ENCODE measurements at regions of chr16 and their contacts with region 1.

Region 1: GRCh38 chr16:89860747-89861304 is 12.6 kb upstream of the TCF25 start:
- DNase-seq: peak; percentile 36 to 86 (median 60)
- ATAC-seq: peak; percentile 50 to 81 (median 76)
- H3K4me3 ChIP-seq: no peak overlapping the region
- H3K27ac ChIP-seq: no peak overlapping the region
- H3K4me1 ChIP-seq: peaks cover 0 to 35% (median 14%) of the 10 kb centered on the region in 12 donors
- H3K27me3 ChIP-seq: no peaks in the 10 kb centered on the region
- CTCF ChIP-seq: peak; percentile 87 to 98 (median 94)
- POLR2A ChIP-seq: no peak

Region 2: GRCh38 chr16:89708441-89708931 is 152.3 kb before region 1 on chr16:
- intact Hi-C with region 1: loop called in 6 of 10 experiments (anchors 2 to 10 kb)
- DNase-seq: peak in 1 of 5 donors; percentile 23
- ATAC-seq: peak in 3 of 4 donors; percentile 2 to 43 (median 31)
- H3K4me3 ChIP-seq: no peak overlapping the region
- H3K27ac ChIP-seq: no peak overlapping the region
- H3K4me1 ChIP-seq: peaks cover 0 to 21% (median 5%) of the 10 kb centered on the region in 12 donors
- H3K27me3 ChIP-seq: peaks cover 0 to 4% (median 0%) of the 10 kb centered on the region in 9 donors
- CTCF ChIP-seq: no peak
- POLR2A ChIP-seq: no peak

Region 3: DNA sequence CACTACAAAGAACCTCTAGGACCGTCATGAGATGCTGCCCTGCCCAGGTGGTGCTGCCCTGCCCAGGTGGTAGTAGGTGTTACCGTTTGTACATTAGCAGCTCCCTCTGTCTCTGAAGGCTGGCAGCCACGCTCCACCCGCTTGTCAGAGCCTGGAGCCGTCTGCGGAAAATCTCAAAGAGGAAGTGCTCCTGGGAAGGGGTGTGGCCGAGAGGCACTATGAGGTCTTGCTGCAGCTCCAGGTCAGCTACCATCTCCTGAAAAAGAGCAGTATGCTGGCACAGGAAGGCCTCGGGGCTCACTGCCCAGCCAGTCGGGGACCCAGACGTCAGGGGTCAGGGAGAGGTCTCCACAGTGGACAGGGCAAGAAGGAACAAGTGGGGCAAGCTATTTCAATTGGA is 111.2 kb before region 1 on chr16:
- intact Hi-C with region 1: loop called in 9 of 10 experiments (anchors 1 to 10 kb)
- DNase-seq: peak in 3 of 5 donors; percentile 28 to 40 (median 39)
- ATAC-seq: peak in 3 of 4 donors; percentile 32 to 42 (median 40)
- H3K4me3 ChIP-seq: no peak overlapping the region
- H3K27ac ChIP-seq: no peak overlapping the region
- H3K4me1 ChIP-seq: peaks cover 0 to 9% (median 0%) of the 10 kb centered on the region in 12 donors
- H3K27me3 ChIP-seq: no peaks in the 10 kb centered on the region
- CTCF ChIP-seq: no peak
- POLR2A ChIP-seq: no peak

Region 4: DNA sequence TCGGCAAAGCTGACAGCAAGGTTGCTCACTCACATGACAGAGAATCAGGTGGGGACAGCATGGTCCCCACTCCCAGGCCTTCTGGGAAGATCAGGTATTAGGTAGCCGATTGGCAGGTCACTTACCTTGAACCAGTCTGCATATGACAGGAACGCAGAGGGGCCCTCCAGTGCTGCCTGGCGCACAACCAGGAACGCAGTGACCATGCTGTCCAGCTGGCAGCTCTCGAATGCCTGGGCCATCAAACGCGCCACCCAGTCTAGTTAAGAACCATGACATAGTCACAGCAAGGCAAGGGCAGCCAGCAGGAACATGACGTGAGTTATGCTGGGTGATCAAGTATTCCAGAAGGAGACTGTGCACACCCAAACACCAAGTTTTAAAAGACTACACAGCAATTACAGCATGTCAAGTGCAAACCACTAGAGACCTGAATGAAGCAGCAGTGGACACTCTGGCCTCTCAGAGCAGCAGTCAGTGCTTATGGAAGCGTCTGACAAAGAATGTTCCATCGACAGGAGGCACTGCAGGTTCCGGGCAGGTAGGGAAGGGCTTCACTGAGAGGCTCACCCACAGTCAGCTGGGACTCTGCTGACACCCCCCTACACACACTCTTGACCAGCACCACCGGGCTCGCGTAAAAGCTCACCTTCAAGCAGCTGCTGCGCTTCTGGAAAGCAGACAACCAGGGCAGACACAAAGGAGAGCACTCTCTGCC is 69.4 kb before region 1 on chr16:
- intact Hi-C with region 1: loop called in 2 of 10 experiments (anchors 5 kb)
- DNase-seq: no peak
- ATAC-seq: peak in 3 of 4 donors; percentile 22 to 47 (median 41)
- H3K4me3 ChIP-seq: no peak overlapping the region
- H3K27ac ChIP-seq: no peak overlapping the region
- H3K4me1 ChIP-seq: no peaks in the 10 kb centered on the region
- H3K27me3 ChIP-seq: no peaks in the 10 kb centered on the region
- CTCF ChIP-seq: no peak
- POLR2A ChIP-seq: no peak

Region 5: GRCh38 chr16:89798832-89799370 is 61.9 kb before region 1 on chr16:
- intact Hi-C with region 1: loop called in 2 of 10 experiments (anchors 5 kb)
- DNase-seq: peak in 4 of 5 donors; percentile 12 to 58 (median 39)
- ATAC-seq: peak; percentile 84 to 89 (median 86)
- H3K4me3 ChIP-seq: peak overlapping the region in 5 of 12 donors; percentile 8 to 29 (median 9)
- H3K27ac ChIP-seq: peak overlapping the region; percentile 4 to 73 (median 39)
- H3K4me1 ChIP-seq: peaks cover 0 to 15% (median 7%) of the 10 kb centered on the region in 12 donors
- H3K27me3 ChIP-seq: no peaks in the 10 kb centered on the region
- CTCF ChIP-seq: no peak
- POLR2A ChIP-seq: no peak

Region 6: GRCh38 chr16:89815639-89816348 is 45.0 kb before region 1 on chr16:
- intact Hi-C with region 1: loop called in 1 of 10 experiments (anchors 5 kb)
- DNase-seq: peak in 1 of 5 donors; percentile 11
- ATAC-seq: no peak
- H3K4me3 ChIP-seq: peak overlapping the region; percentile 59 to 94 (median 70)
- H3K27ac ChIP-seq: peak overlapping the region in 1 of 12 donors; percentile 95
- H3K4me1 ChIP-seq: peaks cover 0 to 28% (median 6%) of the 10 kb centered on the region in 12 donors
- H3K27me3 ChIP-seq: peaks cover 0 to 4% (median 0%) of the 10 kb centered on the region in 9 donors
- CTCF ChIP-seq: no peak
- POLR2A ChIP-seq: no peak

Region 7: GRCh38 chr16:89828199-89828778 is 32.5 kb before region 1 on chr16 and contains the start of gene SPIRE2:
- intact Hi-C with region 1: no loop called
- DNase-seq: peak; percentile 73 to 85 (median 82)
- ATAC-seq: peak; percentile 59 to 86 (median 81)
- H3K4me3 ChIP-seq: peak within 1 kb of the TSS; percentile 34 to 79 (median 59)
- H3K27ac ChIP-seq: peak within 1 kb of the TSS; percentile 32 to 97 (median 86)
- H3K4me1 ChIP-seq: peaks cover 0 to 18% (median 11%) of the 10 kb centered on the region in 12 donors
- H3K27me3 ChIP-seq: peaks cover 0 to 12% (median 0%) of the 10 kb centered on the region in 9 donors
- CTCF ChIP-seq: no peak
- POLR2A ChIP-seq: no peak
- total RNA-seq, gene SPIRE2: 0.31 to 2.3 (median 1.3) TPM